Endothelial cell of umbilical vein (primary cell): ENCODE measurements at regions of chr7 and their contacts with region 1.

Region 1: DNA sequence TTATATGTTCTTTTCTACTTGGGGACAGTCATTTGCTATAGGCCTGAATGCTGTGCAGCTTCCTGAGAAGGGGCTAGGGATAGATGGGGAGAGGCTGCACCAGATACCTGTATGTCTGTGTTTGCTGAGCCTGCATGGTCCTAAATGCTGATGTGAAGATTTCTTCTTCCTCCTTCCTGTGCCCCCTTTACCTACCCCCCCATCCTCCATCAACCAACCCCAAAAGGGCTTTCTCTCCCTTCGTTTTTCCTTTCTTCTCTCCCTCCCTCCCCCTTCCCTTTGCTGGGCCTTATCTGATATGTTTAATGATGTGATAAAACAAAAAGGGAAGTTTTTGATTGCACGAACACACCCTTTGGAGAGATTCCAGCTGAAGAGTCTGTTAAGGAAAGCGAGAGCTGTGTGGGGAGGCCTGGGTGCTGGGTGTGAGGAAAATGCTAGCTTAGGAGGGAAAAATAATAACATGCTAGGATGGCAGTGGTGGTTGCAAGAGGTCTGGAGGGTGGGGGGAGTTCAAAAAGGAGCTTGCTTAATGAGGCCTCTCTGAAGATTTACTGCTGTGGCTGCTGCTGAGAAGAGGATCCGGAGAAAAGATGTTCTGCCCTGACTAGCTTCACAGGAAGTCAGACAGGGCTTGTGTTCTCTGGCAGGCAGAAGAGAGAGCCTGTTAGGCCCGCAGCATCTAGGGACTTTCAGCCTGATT is 101.8 kb downstream of the SAMD9 start:
- DNase-seq: peak; percentile 57
- H3K4me3 ChIP-seq: no peak overlapping the region
- H3K27ac ChIP-seq: peak overlapping the region; percentile 89
- H3K4me1 ChIP-seq: peaks cover 54% of the 10 kb centered on the region
- H3K27me3 ChIP-seq: no peaks in the 10 kb centered on the region
- CTCF ChIP-seq: no peak
- POLR2A ChIP-seq: no peak

Region 2: DNA sequence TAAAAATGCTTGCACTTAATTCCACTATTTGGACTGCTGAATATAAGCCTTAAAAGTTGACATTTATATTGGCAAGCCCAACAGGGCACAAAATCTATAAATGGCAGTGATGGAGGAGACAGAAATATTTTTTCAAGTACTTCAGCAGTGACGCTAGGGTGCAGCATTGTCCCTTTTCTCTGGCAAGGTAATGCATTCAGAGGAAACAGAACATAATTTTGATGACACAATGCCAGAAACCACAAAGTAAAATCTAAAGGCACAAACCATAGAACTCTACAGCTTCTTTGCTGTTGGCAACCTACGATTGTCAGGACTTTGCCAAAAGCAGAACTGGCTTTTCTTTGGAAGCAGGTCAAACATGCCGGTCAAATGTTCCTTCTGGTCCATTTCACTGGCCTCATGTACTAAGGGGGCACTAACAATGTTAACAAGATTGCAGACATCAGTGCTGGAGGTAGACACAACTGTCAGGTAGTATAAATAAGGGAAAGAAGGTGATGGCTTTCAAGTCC is 394.8 kb before region 1 on chr7:
- CTCF ChIA-PET with region 1: interaction called, 4 read pairs
- POLR2A ChIA-PET with region 1: no interaction called
- dilution Hi-C with region 1: no loop called
- intact Hi-C with region 1: loop called (anchors 1 kb)
- DNase-seq: peak; percentile 90
- H3K4me3 ChIP-seq: no peak overlapping the region
- H3K27ac ChIP-seq: peak overlapping the region; percentile 75
- H3K4me1 ChIP-seq: peaks cover 23% of the 10 kb centered on the region
- H3K27me3 ChIP-seq: no peaks in the 10 kb centered on the region
- CTCF ChIP-seq: peak; percentile 53 to 64
- POLR2A ChIP-seq: no peak

Region 3: DNA sequence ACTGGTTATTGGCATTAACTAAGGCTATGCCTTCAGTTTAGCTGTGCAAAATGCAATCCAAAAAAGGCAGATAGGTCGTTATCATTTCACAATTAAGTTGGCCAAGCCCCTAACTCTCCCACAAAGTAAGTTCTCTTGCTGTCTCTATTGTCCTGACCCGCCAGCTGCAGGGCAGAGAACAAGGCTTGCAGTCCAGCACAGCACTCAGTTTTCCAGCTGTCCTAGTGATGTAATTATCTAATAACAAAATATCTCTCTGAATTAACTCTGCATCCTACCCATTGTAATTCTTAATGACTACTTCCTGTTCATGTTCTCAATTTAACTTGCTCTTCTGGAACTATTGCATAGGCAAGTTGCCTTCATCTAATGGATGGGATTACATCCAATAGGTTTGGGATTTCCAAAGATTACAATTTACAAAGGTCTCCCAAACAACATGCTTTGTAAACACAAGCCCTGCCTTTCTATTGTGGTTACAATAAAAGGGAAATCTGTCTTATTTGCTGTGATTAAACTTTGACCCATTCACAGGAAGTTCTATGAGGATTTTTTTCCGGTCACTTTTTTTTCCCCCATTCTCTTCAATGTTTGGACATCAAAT is 234.7 kb before region 1 on chr7:
- CTCF ChIA-PET with region 1: no interaction called
- POLR2A ChIA-PET with region 1: no interaction called
- dilution Hi-C with region 1: no loop called
- intact Hi-C with region 1: loop called (anchors 1 kb)
- DNase-seq: peak; percentile 89
- H3K4me3 ChIP-seq: no peak overlapping the region
- H3K27ac ChIP-seq: peak overlapping the region; percentile 31
- H3K4me1 ChIP-seq: peaks cover 20% of the 10 kb centered on the region
- H3K27me3 ChIP-seq: no peaks in the 10 kb centered on the region
- CTCF ChIP-seq: no peak
- POLR2A ChIP-seq: no peak

Region 4: DNA sequence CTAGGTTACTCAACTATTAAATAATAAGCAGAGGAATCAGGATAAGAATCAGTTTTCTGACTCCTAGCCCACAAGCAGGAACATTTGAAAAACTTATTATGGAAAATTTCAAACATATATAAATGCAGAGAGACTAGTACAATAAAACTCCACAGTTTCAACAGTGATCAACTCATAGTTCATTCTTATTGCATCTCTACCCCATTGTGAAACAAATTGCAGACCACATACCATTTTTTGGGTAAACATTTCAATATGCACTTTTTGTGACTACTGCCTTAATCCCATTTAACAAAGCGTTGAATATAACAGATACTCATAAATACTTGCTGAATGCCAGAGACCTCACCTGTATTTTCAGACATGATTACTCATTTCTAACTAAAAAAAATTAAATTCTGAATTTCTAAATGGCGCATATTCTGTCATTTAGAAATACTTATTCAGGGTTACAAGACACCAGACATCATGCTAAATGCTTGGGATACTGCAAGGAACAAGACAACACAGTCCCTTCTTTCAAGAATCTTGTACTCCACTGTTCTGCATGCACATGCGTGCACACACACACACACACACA is 190.9 kb before region 1 on chr7:
- CTCF ChIA-PET with region 1: no interaction called
- POLR2A ChIA-PET with region 1: no interaction called
- dilution Hi-C with region 1: no loop called
- intact Hi-C with region 1: no loop called
- DNase-seq: no peak
- H3K4me3 ChIP-seq: no peak overlapping the region
- H3K27ac ChIP-seq: no peak overlapping the region
- H3K4me1 ChIP-seq: no peaks in the 10 kb centered on the region
- H3K27me3 ChIP-seq: no peaks in the 10 kb centered on the region
- CTCF ChIP-seq: no peak
- POLR2A ChIP-seq: no peak

Region 5: DNA sequence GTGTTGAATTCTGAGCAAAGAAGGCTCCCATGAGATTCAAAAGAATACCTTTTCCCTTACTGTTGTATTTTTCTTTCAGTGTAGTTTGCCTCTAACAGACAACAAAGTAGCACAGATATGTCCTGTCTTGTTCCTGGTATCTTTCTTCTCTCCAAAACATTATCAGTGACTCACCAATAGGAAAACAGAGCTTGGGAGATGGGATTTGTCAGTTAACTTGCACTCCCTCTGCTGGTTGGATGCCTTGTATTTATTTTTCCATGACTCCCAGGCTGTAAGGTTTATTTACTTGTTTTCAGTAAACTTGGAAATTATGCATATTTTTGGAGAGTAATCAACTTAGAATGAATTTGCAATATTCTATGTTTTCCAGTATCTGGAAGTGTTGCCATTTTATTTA is 27.9 kb before region 1 on chr7:
- CTCF ChIA-PET with region 1: interaction called, 10 read pairs
- POLR2A ChIA-PET with region 1: no interaction called
- dilution Hi-C with region 1: no loop called
- intact Hi-C with region 1: no loop called
- DNase-seq: peak; percentile 57
- H3K4me3 ChIP-seq: no peak overlapping the region
- H3K27ac ChIP-seq: no peak overlapping the region
- H3K4me1 ChIP-seq: no peaks in the 10 kb centered on the region
- H3K27me3 ChIP-seq: no peaks in the 10 kb centered on the region
- CTCF ChIP-seq: peak; percentile 26 to 33
- POLR2A ChIP-seq: no peak

Region 6: DNA sequence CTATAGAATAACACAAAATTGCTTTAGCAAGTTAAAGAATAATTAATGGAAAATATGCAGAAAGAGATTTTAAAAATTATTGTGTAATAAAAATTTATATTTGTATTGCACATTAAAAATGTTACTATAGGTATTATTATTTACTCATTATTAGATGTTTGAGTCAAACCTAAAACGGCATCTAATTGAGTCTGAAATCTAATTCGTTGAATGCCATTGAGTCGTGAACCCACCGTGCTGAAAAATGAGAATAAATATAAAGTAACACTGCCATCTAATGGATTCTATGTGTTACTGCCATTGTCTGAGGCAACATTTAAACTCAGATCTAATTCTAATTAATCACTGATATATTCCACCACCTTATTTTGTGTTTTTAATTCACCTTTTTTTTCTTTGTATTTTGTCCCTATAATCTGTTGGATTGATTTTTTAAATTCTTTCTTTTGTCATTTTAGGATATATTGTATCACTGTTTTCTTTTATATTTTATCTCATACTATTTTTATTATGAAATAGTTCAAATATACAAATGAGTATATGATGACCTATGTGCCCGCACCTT is 39.7 kb after region 1 on chr7:
- CTCF ChIA-PET with region 1: interaction called, 3 read pairs
- POLR2A ChIA-PET with region 1: no interaction called
- dilution Hi-C with region 1: no loop called
- intact Hi-C with region 1: loop called (anchors 1 kb)
- DNase-seq: peak; percentile 53
- H3K4me3 ChIP-seq: no peak overlapping the region
- H3K27ac ChIP-seq: no peak overlapping the region
- H3K4me1 ChIP-seq: no peaks in the 10 kb centered on the region
- H3K27me3 ChIP-seq: peaks cover 0 to 3% of the 10 kb centered on the region in 2 experiments
- CTCF ChIP-seq: peak; percentile 33 to 48
- POLR2A ChIP-seq: no peak

Region 7: GRCh38 chr7:93212881-93213280 is 197.0 kb after region 1 on chr7:
- CTCF ChIA-PET with region 1: no interaction called
- POLR2A ChIA-PET with region 1: no interaction called
- dilution Hi-C with region 1: no loop called
- intact Hi-C with region 1: no loop called
- DNase-seq: no peak
- H3K4me3 ChIP-seq: no peak overlapping the region
- H3K27ac ChIP-seq: no peak overlapping the region
- H3K4me1 ChIP-seq: no peaks in the 10 kb centered on the region
- H3K27me3 ChIP-seq: peaks cover 3 to 39% of the 10 kb centered on the region in 2 experiments
- CTCF ChIP-seq: no peak
- POLR2A ChIP-seq: no peak

Region 8: GRCh38 chr7:94183289-94183749 is 1167.4 kb after region 1 on chr7:
- CTCF ChIA-PET with region 1: no interaction called
- POLR2A ChIA-PET with region 1: no interaction called
- dilution Hi-C with region 1: no loop called
- intact Hi-C with region 1: loop called (anchors 2 kb)
- DNase-seq: peak; percentile 99
- H3K4me3 ChIP-seq: no peak overlapping the region
- H3K27ac ChIP-seq: peak overlapping the region; percentile 98
- H3K4me1 ChIP-seq: peaks cover 49% of the 10 kb centered on the region
- H3K27me3 ChIP-seq: no peaks in the 10 kb centered on the region
- CTCF ChIP-seq: no peak
- POLR2A ChIP-seq: no peak